HepG2 (cell line): ENCODE measurements at regions of chr4 and their contacts with region 1.

Region 1: GRCh38 chr4:124797223-124797622 is 84.7 kb upstream of the ANKRD50 start:
- DNase-seq: no peak
- ATAC-seq: no peak
- H3K4me3 ChIP-seq: no peak overlapping the region
- H3K27ac ChIP-seq: no peak overlapping the region
- H3K4me1 ChIP-seq: no peaks in the 10 kb centered on the region
- H3K27me3 ChIP-seq: no peaks in the 10 kb centered on the region
- CTCF ChIP-seq: no peak
- EP300 ChIP-seq: no peak
- POLR2A ChIP-seq: no peak
- RAD21 ChIP-seq: no peak

Region 2: DNA sequence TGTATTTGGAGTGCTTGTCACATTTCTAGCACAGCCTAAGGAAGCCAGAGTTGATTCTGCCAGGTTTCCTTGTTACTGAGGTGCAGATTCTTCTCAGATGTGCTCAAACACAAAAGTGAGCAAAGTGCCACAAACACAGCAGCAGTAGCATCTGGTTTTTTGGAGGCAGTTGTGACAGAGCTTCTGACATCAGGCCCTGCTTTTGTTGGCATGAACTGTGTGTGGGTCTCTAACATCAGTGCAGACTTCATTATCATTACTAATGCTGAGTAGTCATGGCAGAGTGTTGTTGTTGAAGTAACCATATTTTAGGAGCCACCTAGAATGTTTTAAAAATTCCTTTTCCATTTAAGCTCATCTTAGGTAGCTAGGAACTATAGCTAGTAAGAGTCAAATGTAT is 741.3 kb before region 1 on chr4:
- CTCF ChIA-PET with region 1: no interaction called
- POLR2A ChIA-PET with region 1: no interaction called
- in situ Hi-C with region 1: no loop called
- intact Hi-C with region 1: loop called (anchors 5 kb)
- DNase-seq: no peak
- ATAC-seq: no peak
- H3K4me3 ChIP-seq: no peak overlapping the region
- H3K27ac ChIP-seq: no peak overlapping the region
- H3K4me1 ChIP-seq: peaks cover 6% of the 10 kb centered on the region; the same call in 1 of the 2 replicates
- H3K27me3 ChIP-seq: no peaks in the 10 kb centered on the region; a peak in 1 of 5 replicates
- CTCF ChIP-seq: no peak
- EP300 ChIP-seq: no peak
- POLR2A ChIP-seq: no peak
- RAD21 ChIP-seq: no peak

Region 3: GRCh38 chr4:124372916-124373315 is 424.3 kb before region 1 on chr4:
- CTCF ChIA-PET with region 1: no interaction called
- POLR2A ChIA-PET with region 1: no interaction called
- in situ Hi-C with region 1: no loop called
- intact Hi-C with region 1: no loop called
- DNase-seq: no peak
- ATAC-seq: no peak
- H3K4me3 ChIP-seq: no peak overlapping the region
- H3K27ac ChIP-seq: no peak overlapping the region
- H3K4me1 ChIP-seq: no peaks in the 10 kb centered on the region
- H3K27me3 ChIP-seq: no peaks in the 10 kb centered on the region
- CTCF ChIP-seq: no peak
- EP300 ChIP-seq: no peak
- POLR2A ChIP-seq: no peak
- RAD21 ChIP-seq: no peak

Region 4: GRCh38 chr4:124712372-124713184 is 84.6 kb before region 1 on chr4 and contains the start of gene ANKRD50:
- CTCF ChIA-PET with region 1: no interaction called
- POLR2A ChIA-PET with region 1: no interaction called
- in situ Hi-C with region 1: no loop called
- intact Hi-C with region 1: no loop called
- DNase-seq: peak; percentile 74
- ATAC-seq: peak; percentile 82
- H3K4me3 ChIP-seq: peak within 1 kb of the TSS; percentile 80 to 89 (median 85)
- H3K27ac ChIP-seq: peak within 1 kb of the TSS; percentile 87
- H3K4me1 ChIP-seq: peaks cover 36% of the 10 kb centered on the region
- H3K27me3 ChIP-seq: no peaks in the 10 kb centered on the region; a peak in 1 of 5 replicates
- CTCF ChIP-seq: no peak
- EP300 ChIP-seq: peak in 1 of 2 experiments; percentile 22; a peak in 1 of 4 replicates
- POLR2A ChIP-seq: peak; percentile 50 to 68; a peak in 3 of 4 replicates
- RAD21 ChIP-seq: no peak
- total RNA-seq, gene ANKRD50: 4.4 and 10.2 TPM in 2 replicates